Prostate gland (tissue), 2 donors: ENCODE measurements at regions of chr21 and their contacts with region 1.

Region 1: GRCh38 chr21:40158366-40158765 is 291.1 kb downstream of the PCP4 start:
- DNase-seq: no peak
- H3K4me3 ChIP-seq: no peak overlapping the region
- H3K27ac ChIP-seq: no peak overlapping the region
- H3K4me1 ChIP-seq: no peaks in the 10 kb centered on the region
- H3K27me3 ChIP-seq: no peaks in the 10 kb centered on the region
- CTCF ChIP-seq: no peak
- POLR2A ChIP-seq: no peak

Region 2: DNA sequence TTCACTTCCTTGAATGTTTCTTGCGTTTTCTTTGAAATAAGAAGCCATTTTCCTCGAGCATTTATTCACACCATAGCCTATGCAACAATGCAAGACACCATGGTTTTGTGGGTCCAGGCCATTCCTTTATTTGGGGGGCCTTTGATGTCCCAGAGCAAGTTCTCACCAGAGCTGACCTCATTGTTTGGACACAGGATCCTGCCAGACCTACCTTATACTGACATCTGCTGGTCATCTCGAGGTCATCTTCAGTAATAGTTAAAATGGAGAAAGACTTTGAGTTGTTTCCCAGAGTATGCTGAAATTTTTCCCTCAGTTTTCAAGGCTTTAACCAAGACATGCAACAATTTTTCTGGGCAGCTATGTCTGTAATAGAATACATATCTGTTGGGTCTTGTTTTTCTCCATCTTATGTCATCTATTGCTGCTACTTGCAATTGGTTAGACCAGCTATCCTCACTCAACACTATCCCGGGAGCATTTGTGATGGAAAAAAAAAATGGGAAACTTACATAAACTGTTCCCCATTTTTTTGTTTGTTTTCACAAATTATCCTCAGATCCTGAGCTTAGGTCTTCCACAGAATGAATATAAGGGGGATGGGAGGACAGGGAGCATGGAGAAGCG is 975.6 kb after region 1 on chr21:
- intact Hi-C with region 1: loop called (anchors 10 kb)
- DNase-seq: no peak
- H3K4me3 ChIP-seq: no peak overlapping the region
- H3K27ac ChIP-seq: no peak overlapping the region
- H3K4me1 ChIP-seq: no peaks in the 10 kb centered on the region
- H3K27me3 ChIP-seq: no peaks in the 10 kb centered on the region
- CTCF ChIP-seq: peak in 2 of 4 experiments; percentile 44 to 45
- POLR2A ChIP-seq: no peak